Ascending aorta (tissue), 2 donors: ENCODE measurements at regions of chr15 and their contacts with region 1.

Region 1: DNA sequence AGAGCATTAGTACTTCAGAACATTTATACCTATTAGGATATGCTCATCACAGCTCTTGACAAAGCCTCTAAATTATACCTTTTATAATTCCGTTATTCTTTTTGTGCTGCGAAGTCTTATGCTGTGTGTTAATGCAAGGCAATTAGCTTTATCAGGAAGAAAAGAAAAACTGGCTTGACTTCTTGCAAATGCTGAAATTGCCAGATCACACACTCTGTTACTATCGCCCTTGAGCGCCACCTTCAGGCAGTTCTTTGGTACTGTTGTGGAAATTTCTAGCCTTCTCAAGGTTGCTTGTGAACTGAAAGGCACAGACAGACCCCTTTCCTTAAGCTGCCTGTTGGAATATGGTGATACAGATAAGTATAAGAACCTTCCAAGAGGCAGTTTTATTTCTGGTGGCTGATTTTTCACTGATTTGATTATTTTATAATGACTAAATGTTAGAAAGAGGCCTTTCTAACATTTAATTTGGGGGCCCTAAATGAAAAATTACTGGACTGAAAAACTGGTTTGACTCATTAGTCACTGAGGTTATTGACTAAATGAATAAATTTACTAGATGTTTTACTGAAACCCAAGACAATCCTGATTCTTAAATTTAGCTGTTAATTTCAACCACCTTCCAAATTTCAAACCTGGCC is 126.2 kb upstream of the RASGRP1 start:
- DNase-seq: peak in 1 of 2 donors; percentile 78
- H3K4me3 ChIP-seq: no peak overlapping the region
- H3K27ac ChIP-seq: peak overlapping the region in 1 of 2 donors; percentile 38
- H3K4me1 ChIP-seq: peaks cover 0 to 5% of the 10 kb centered on the region in 2 donors
- H3K27me3 ChIP-seq: no peaks in the 10 kb centered on the region
- CTCF ChIP-seq: peak; percentile 35 to 83 (median 67)

Region 2: DNA sequence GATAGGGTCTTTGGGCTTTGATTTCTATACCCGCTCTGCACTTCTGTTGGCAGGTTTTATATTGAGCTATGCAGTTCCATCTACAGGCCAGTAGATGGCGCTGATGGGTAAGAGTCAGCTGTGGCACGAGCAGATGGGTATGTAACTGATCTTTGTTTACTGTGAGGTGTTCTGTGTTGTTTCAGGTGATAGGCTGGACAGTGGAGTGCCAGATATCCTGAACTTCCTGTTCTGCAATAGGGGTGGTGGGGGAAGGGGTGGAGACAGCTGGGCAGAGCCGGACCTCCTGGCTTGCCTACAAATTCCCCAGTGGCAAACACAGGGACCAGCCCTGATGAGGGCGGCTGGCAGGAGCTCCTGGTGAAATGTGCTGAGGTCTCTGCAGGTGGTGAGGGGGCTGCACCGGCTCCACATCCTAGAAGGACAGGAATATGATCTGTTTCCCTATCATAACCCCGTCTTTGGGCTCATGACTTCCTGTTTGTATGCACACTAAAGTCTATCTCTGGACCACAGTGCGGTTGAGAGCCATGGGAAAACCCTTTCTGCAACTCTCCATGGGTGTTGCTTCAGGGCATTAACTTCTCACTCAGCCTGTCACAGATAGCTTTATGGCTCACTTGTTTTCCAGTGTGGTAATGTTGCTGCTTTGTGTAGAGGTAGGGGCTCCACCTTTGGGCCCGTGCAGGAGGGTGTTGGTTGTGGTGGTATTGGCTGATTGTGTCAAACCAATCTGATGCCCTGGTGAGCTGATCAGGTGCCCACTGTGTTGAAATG is 250.3 kb before region 1 on chr15:
- intact Hi-C with region 1: loop called (anchors 5 kb)
- DNase-seq: no peak
- H3K4me3 ChIP-seq: no peak overlapping the region
- H3K27ac ChIP-seq: no peak overlapping the region
- H3K4me1 ChIP-seq: no peaks in the 10 kb centered on the region
- H3K27me3 ChIP-seq: no peaks in the 10 kb centered on the region
- CTCF ChIP-seq: peak; percentile 71 to 92 (median 92)

Region 3: GRCh38 chr15:38563723-38564519 is 126.9 kb before region 1 on chr15:
- intact Hi-C with region 1: loop called (anchors 2 kb)
- DNase-seq: peak; percentile 15 to 79
- H3K4me3 ChIP-seq: peak overlapping the region; percentile 60 to 72
- H3K27ac ChIP-seq: no peak overlapping the region
- H3K4me1 ChIP-seq: peaks cover 0 to 3% of the 10 kb centered on the region in 2 donors
- H3K27me3 ChIP-seq: no peaks in the 10 kb centered on the region
- CTCF ChIP-seq: peak; percentile 74 to 89 (median 79)

Region 4: DNA sequence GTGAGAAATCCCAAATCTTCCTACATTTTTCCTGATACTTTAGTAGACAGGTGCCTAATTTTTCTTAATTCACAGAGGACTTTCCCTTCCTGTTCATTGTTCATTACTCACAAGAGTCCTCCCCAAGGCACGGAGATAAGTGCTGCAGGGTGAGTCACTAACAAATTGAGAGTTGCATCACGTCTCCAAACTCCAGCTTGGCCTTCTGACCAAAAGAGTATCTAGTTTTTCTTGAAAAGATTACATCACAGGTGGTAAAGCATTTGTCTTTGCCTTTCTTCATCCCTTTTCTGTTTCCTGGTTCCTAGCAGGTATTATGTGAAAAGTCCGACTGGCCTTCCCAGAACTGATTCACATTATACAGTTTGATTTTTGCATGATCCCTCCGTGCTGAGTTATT is 101.3 kb before region 1 on chr15:
- intact Hi-C with region 1: no loop called
- DNase-seq: no peak
- H3K4me3 ChIP-seq: no peak overlapping the region
- H3K27ac ChIP-seq: no peak overlapping the region
- H3K4me1 ChIP-seq: no peaks in the 10 kb centered on the region
- H3K27me3 ChIP-seq: no peaks in the 10 kb centered on the region
- CTCF ChIP-seq: no peak